ENCODE measurements at regions of chr6 and their contacts with region 1.

Region 1: GRCh38 chr6:30769088-30769852 is 24.9 kb upstream of the IER3 start:
- DNase-seq: peak; percentile 95
- H3K4me3 ChIP-seq: peak overlapping the region in 1 of 3 experiments; percentile 22
- H3K27ac ChIP-seq: peak overlapping the region; percentile 97
- H3K4me1 ChIP-seq: peaks cover 31% of the 10 kb centered on the region
- H3K27me3 ChIP-seq: no peaks in the 10 kb centered on the region
- CTCF ChIP-seq: no peak

Region 2: DNA sequence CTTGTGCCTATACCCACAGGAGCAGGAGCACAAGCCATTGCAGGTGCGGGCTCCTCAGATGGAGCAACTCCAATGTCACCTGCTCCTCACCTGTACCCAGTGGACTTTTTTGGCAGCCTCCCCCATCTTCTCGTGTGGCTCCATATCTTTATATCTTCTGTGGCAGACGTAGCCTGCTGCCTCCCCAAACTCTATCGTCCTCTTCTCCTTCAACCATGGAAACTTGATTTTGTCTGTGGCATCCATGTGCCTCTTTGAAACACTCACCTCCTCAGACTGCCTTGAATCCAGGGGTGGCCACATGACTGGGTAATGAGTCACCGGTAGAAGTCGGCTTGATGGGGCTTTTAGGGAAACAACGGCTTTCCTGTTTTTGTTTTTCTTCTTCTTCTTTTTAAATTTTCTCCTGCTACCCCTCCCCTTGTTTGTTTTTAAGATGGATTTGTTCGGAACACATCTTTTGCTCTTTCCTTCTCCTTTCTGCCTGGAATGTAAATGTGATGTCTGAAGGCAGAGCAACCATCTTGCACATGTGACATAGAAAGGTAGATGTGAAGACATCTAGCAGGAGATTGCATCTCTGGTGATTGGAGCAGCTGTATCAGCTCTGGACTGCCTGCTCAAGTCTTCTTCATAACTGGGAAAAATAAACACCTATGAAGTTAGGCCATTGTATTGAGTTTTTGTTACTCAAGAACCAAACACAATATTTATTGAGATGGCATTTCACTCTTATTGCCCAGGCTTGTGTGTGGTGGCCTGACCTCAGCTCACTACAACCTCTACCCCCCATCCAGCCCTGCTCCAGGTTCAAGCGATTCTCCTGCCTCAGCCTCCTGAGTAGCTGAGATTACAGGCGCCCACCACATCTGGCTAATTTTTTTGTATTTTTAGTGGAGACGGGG is 45.1 kb after region 1 on chr6:
- CTCF ChIA-PET with region 1: no interaction called
- dilution Hi-C with region 1: no loop called
- in situ Hi-C with region 1: no loop called
- intact Hi-C with region 1: loop called (anchors 1 kb)
- DNase-seq: peak; percentile 88
- H3K4me3 ChIP-seq: no peak overlapping the region
- H3K27ac ChIP-seq: peak overlapping the region; percentile 72
- H3K4me1 ChIP-seq: peaks cover 51% of the 10 kb centered on the region
- H3K27me3 ChIP-seq: no peaks in the 10 kb centered on the region
- CTCF ChIP-seq: no peak

Region 3: GRCh38 chr6:30821862-30822782 is 52.9 kb after region 1 on chr6:
- CTCF ChIA-PET with region 1: interaction called, 3 read pairs
- dilution Hi-C with region 1: no loop called
- in situ Hi-C with region 1: no loop called
- intact Hi-C with region 1: loop called (anchors 1 kb)
- DNase-seq: peak; percentile 64
- H3K4me3 ChIP-seq: peak overlapping the region in 1 of 3 experiments; percentile 10
- H3K27ac ChIP-seq: peak overlapping the region; percentile 84
- H3K4me1 ChIP-seq: peaks cover 49% of the 10 kb centered on the region
- H3K27me3 ChIP-seq: no peaks in the 10 kb centered on the region
- CTCF ChIP-seq: peak; percentile 44 to 59

Region 4: GRCh38 chr6:30862156-30862875 is 93.0 kb after region 1 on chr6:
- CTCF ChIA-PET with region 1: no interaction called
- dilution Hi-C with region 1: loop called (anchors 5 kb)
- in situ Hi-C with region 1: no loop called
- intact Hi-C with region 1: no loop called
- DNase-seq: no peak
- H3K4me3 ChIP-seq: no peak overlapping the region
- H3K27ac ChIP-seq: no peak overlapping the region
- H3K4me1 ChIP-seq: no peaks in the 10 kb centered on the region
- H3K27me3 ChIP-seq: no peaks in the 10 kb centered on the region
- CTCF ChIP-seq: no peak

Measured in mammary epithelial cell (primary cell).